HepG2 (cell line): ENCODE measurements at regions of chr2 and their contacts with region 1.

Region 1: GRCh38 chr2:134118279-134119116 is 135.4 kb upstream of the MGAT5 start:
- DNase-seq: peak; percentile 92
- ATAC-seq: peak; percentile 47
- H3K4me3 ChIP-seq: peak overlapping the region; percentile 80 to 90 (median 83)
- H3K27ac ChIP-seq: no peak overlapping the region
- H3K4me1 ChIP-seq: peaks cover 44% of the 10 kb centered on the region
- H3K27me3 ChIP-seq: no peaks in the 10 kb centered on the region
- CTCF ChIP-seq: peak; percentile 93
- EP300 ChIP-seq: 0 out of 4 replicates have a peak, but pooled peaks of 1 of the 2 experiments have one; percentile 9
- POLR2A ChIP-seq: no peak
- RAD21 ChIP-seq: peak; percentile 94

Region 2: DNA sequence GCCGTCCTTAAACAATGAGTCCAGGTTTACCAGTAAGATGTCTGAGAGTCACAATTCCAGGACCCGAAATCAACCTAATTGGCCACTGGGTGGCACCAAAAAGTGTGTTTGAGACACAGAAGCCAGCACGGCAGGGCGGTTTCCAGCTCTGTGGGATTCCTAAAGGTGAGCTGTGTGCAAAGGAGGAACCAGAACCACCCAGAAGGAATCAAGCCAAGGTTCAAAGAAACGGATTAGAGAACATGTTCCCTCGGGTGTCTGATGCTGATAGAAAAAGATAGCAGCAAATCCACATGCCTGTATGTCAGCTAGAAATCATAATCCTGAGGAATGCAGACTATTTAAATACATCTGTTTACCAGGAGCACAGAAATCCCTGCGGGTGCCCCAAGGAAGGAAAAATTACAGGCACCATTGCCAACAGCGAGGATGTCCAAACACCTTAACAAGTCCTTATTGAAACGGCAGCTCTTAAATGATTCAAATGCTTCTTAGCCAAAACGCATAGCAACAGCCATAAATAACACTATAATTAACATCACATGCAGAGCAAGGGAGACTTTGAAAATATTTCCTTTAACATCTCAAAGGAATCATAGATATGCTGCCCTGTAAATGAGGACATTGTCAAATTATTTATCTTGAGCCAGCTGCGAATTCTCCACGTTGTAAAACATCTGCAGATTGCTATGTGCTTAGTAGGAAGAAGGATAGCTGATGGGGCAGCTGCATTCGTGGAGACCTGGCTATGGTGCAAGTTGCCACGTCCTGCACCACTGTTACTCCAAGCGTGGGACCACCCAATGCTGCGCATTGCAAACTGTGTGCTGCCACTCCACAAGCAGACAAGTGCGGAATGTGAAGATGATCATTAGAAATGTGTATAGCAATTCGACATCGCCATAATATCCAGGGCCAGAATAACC is 231.5 kb before region 1 on chr2:
- CTCF ChIA-PET with region 1: no interaction called
- POLR2A ChIA-PET with region 1: no interaction called
- in situ Hi-C with region 1: no loop called
- intact Hi-C with region 1: loop called (anchors 1 kb)
- DNase-seq: peak; percentile 70
- ATAC-seq: peak; percentile 93
- H3K4me3 ChIP-seq: no peak overlapping the region
- H3K27ac ChIP-seq: no peak overlapping the region
- H3K4me1 ChIP-seq: no peaks in the 10 kb centered on the region
- H3K27me3 ChIP-seq: peaks cover 2 to 43% of the 10 kb centered on the region in 2 experiments; a peak in 3 of 5 replicates
- CTCF ChIP-seq: peak; percentile 85
- EP300 ChIP-seq: no peak
- POLR2A ChIP-seq: no peak
- RAD21 ChIP-seq: peak; percentile 56; the same call in 1 of the 2 replicates

Region 3: GRCh38 chr2:134173338-134174016 is 55.0 kb after region 1 on chr2:
- CTCF ChIA-PET with region 1: no interaction called
- POLR2A ChIA-PET with region 1: no interaction called
- in situ Hi-C with region 1: no loop called
- intact Hi-C with region 1: loop called (anchors 5 kb)
- DNase-seq: no peak
- ATAC-seq: no peak
- H3K4me3 ChIP-seq: no peak overlapping the region
- H3K27ac ChIP-seq: no peak overlapping the region
- H3K4me1 ChIP-seq: no peaks in the 10 kb centered on the region
- H3K27me3 ChIP-seq: no peaks in the 10 kb centered on the region
- CTCF ChIP-seq: no peak
- EP300 ChIP-seq: no peak
- POLR2A ChIP-seq: no peak
- RAD21 ChIP-seq: no peak

Region 4: DNA sequence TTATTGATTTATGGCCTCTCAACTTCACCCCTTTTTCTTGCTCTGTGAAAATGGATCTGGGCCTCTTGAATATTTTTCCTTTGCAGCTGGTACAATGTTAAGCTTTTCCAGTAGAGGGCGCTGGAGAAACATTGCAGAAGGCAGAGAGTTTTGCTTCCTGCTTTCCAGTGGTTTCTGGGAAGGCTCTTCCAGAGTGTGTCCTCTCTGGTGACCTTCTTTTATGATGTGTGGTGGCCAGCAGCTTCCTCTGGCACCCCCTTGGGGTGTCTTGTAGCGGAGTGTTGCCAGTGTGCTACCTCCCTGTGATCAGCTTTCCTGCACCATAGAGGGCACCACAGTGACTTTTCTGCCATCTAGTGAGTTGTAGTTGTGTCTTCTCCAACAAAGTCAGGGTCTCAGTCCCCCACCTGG is 110.0 kb after region 1 on chr2:
- CTCF ChIA-PET with region 1: interaction called, 10 read pairs
- POLR2A ChIA-PET with region 1: no interaction called
- in situ Hi-C with region 1: no loop called
- intact Hi-C with region 1: no loop called
- DNase-seq: peak; percentile 72
- ATAC-seq: peak; percentile 87
- H3K4me3 ChIP-seq: no peak overlapping the region
- H3K27ac ChIP-seq: no peak overlapping the region
- H3K4me1 ChIP-seq: 0 out of 2 replicates have a peak, but pooled peaks cover 4% of the 10 kb centered on the region
- H3K27me3 ChIP-seq: no peaks in the 10 kb centered on the region
- CTCF ChIP-seq: peak; percentile 77
- EP300 ChIP-seq: no peak
- POLR2A ChIP-seq: no peak
- RAD21 ChIP-seq: peak; percentile 55

Region 5: GRCh38 chr2:134310107-134311079 is 191.9 kb after region 1 on chr2:
- CTCF ChIA-PET with region 1: no interaction called
- POLR2A ChIA-PET with region 1: no interaction called
- in situ Hi-C with region 1: no loop called
- intact Hi-C with region 1: no loop called
- DNase-seq: no peak
- ATAC-seq: no peak
- H3K4me3 ChIP-seq: no peak overlapping the region
- H3K27ac ChIP-seq: no peak overlapping the region
- H3K4me1 ChIP-seq: no peaks in the 10 kb centered on the region
- H3K27me3 ChIP-seq: no peaks in the 10 kb centered on the region
- CTCF ChIP-seq: no peak
- EP300 ChIP-seq: no peak
- POLR2A ChIP-seq: no peak
- RAD21 ChIP-seq: no peak

Region 6: GRCh38 chr2:134359367-134360081 is 241.0 kb after region 1 on chr2:
- CTCF ChIA-PET with region 1: no interaction called
- POLR2A ChIA-PET with region 1: no interaction called
- in situ Hi-C with region 1: no loop called
- intact Hi-C with region 1: loop called (anchors 2 kb)
- DNase-seq: peak; percentile 88
- ATAC-seq: peak; percentile 84
- H3K4me3 ChIP-seq: no peak overlapping the region; a peak in 1 of 6 replicates
- H3K27ac ChIP-seq: peak overlapping the region; percentile 53
- H3K4me1 ChIP-seq: peaks cover 34% of the 10 kb centered on the region
- H3K27me3 ChIP-seq: no peaks in the 10 kb centered on the region
- CTCF ChIP-seq: no peak
- EP300 ChIP-seq: peak in 1 of 2 experiments; percentile 51; a peak in 1 of 4 replicates
- POLR2A ChIP-seq: no peak
- RAD21 ChIP-seq: no peak

Region 7: DNA sequence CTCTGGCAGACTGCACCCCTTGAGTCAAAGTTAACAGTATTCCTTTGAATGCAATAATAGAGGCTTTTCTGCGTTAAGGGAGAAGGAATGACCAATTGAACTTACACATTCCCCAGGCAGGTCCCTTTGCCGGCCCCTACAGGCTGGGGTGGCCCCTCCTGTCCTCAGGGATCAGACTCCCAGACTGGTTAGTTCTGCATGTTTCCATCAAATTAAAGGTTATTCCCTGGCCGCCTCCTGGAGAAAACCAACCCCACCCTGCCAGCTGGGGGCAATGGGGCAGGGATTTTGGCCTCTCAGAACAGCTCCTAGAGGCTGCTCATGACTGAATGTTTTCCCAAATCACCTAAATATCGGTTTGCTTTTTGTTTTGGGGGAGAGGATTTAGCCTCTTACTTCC is 335.0 kb after region 1 on chr2:
- CTCF ChIA-PET with region 1: interaction called, 24 read pairs
- POLR2A ChIA-PET with region 1: no interaction called
- in situ Hi-C with region 1: loop called (anchors 10 kb)
- intact Hi-C with region 1: loop called (anchors 1 kb)
- DNase-seq: no peak
- ATAC-seq: no peak
- H3K4me3 ChIP-seq: no peak overlapping the region
- H3K27ac ChIP-seq: no peak overlapping the region
- H3K4me1 ChIP-seq: peaks cover 41% of the 10 kb centered on the region
- H3K27me3 ChIP-seq: no peaks in the 10 kb centered on the region
- CTCF ChIP-seq: no peak
- EP300 ChIP-seq: no peak
- POLR2A ChIP-seq: no peak
- RAD21 ChIP-seq: no peak

Region 8: GRCh38 chr2:134918526-134919340 is 800.2 kb after region 1 on chr2 and contains the start of gene CCNT2:
- CTCF ChIA-PET with region 1: no interaction called
- POLR2A ChIA-PET with region 1: no interaction called
- in situ Hi-C with region 1: no loop called
- intact Hi-C with region 1: loop called (anchors 10 kb)
- DNase-seq: peak; percentile 99
- ATAC-seq: peak; percentile 88
- H3K4me3 ChIP-seq: peak within 1 kb of the TSS; percentile 77 to 100 (median 96)
- H3K27ac ChIP-seq: peak within 1 kb of the TSS; percentile 99
- H3K4me1 ChIP-seq: peaks cover 41% of the 10 kb centered on the region
- H3K27me3 ChIP-seq: no peaks in the 10 kb centered on the region; a peak in 1 of 5 replicates
- CTCF ChIP-seq: 0 out of 2 replicates have a peak, but pooled peaks have one; percentile 17
- EP300 ChIP-seq: peak in 1 of 2 experiments; percentile 3; a peak in 2 of 4 replicates
- POLR2A ChIP-seq: peak; percentile 84 to 87
- RAD21 ChIP-seq: peak; percentile 39; the same call in 1 of the 2 replicates
- total RNA-seq, gene CCNT2: 31.2 and 34.4 TPM in 2 replicates